Activated CD4-positive, alpha-beta memory T cell treated with anti-CD3 and anti-CD28 coated beads, Interleukin-2, amount 10 ng/mL, durations not matched to agents 7 days and 5 days (primary cell): ENCODE measurements at regions of chr4 and their contacts with region 1.

Region 1: DNA sequence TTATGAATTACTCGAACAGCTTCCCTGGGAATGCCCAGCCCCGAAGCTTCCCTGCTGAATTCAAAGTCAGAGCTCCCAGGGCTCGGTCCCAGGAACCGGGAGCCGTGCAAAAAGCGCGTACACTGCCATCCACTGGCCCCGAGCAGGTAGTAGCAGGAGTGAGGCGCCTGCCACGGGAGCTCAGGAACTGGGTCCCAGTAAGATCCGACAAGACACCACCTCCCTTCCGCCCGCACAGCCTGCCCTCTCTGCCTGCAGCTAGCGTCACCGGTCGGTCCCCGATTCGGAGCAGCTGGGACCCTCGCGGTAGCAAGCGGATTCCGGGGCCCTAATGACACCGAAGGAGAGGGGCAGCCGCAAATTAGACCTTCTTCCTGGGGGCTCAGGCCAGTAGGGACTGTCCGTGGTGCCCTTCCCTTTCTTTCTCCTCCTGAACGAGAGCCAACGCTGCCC is 1.2 kb downstream of the CORIN start:
- DNase-seq: peak; percentile 60
- H3K4me3 Mint-ChIP-seq: peak overlapping the region; percentile 74
- H3K27ac Mint-ChIP-seq: no peak overlapping the region
- H3K4me1 Mint-ChIP-seq: peaks cover 26% of the 10 kb centered on the region
- H3K27me3 Mint-ChIP-seq: peaks cover 26% of the 10 kb centered on the region

Region 2: GRCh38 chr4:47686294-47686872 is 150.3 kb before region 1 on chr4:
- CTCF ChIA-PET with region 1: interaction called, 26 read pairs
- POLR2A ChIA-PET with region 1: no interaction called
- DNase-seq: peak; percentile 68
- H3K4me3 Mint-ChIP-seq: no peak overlapping the region
- H3K27ac Mint-ChIP-seq: no peak overlapping the region
- H3K4me1 Mint-ChIP-seq: no peaks in the 10 kb centered on the region
- H3K27me3 Mint-ChIP-seq: peaks cover 19% of the 10 kb centered on the region

Region 3: GRCh38 chr4:47692639-47693180 is 144.0 kb before region 1 on chr4:
- CTCF ChIA-PET with region 1: interaction called, 26 read pairs
- POLR2A ChIA-PET with region 1: no interaction called
- DNase-seq: no peak
- H3K4me3 Mint-ChIP-seq: no peak overlapping the region
- H3K27ac Mint-ChIP-seq: no peak overlapping the region
- H3K4me1 Mint-ChIP-seq: no peaks in the 10 kb centered on the region
- H3K27me3 Mint-ChIP-seq: peaks cover 23% of the 10 kb centered on the region

Region 4: DNA sequence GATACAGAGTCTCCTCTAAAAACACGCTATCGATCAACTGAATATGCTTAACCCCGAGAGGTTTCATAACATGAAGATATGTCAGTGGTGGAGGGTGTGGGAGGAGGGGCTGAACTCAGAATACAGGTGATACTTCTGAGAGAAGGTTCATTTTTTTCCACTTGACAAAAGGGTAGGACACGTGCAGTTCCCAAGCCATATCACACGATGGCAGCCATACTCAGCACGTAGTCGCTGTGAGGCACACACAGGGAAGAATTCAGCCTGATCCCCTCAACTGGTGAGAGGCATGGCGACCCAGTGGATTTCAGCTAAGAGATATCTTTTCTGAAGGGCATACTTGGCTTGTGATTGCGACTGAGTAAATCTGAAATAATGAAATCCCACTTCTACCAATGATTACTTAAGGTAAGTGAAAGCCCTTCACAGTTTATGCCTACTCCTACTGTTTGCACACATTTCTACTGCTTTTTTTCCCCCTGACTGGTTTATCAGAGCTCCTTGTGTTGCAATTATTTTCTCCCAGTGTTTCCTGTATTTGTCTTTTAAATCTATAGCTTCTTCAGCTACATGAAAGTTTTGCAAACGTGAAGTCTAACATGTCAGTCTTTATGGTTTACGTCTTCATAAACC is 131.9 kb before region 1 on chr4:
- CTCF ChIA-PET with region 1: interaction called, 39 read pairs
- POLR2A ChIA-PET with region 1: no interaction called
- DNase-seq: no peak
- H3K4me3 Mint-ChIP-seq: no peak overlapping the region
- H3K27ac Mint-ChIP-seq: no peak overlapping the region
- H3K4me1 Mint-ChIP-seq: no peaks in the 10 kb centered on the region
- H3K27me3 Mint-ChIP-seq: peaks cover 21% of the 10 kb centered on the region

Region 5: GRCh38 chr4:47852136-47852535 is 15.5 kb after region 1 on chr4:
- CTCF ChIA-PET with region 1: interaction called, 12 read pairs
- POLR2A ChIA-PET with region 1: no interaction called
- DNase-seq: no peak
- H3K4me3 Mint-ChIP-seq: no peak overlapping the region
- H3K27ac Mint-ChIP-seq: no peak overlapping the region
- H3K4me1 Mint-ChIP-seq: no peaks in the 10 kb centered on the region
- H3K27me3 Mint-ChIP-seq: no peaks in the 10 kb centered on the region